A549 (cell line): ENCODE measurements at regions of chrX and their contacts with region 1.

Region 1: GRCh38 chrX:109911046-109911445 is 91.9 kb upstream of the TMEM164 start:
- DNase-seq: peak in 1 of 2 experiments; percentile 7
- ATAC-seq: no peak; a peak in 1 of 6 replicates
- H3K4me3 ChIP-seq: no peak overlapping the region
- H3K27ac ChIP-seq: peak overlapping the region in 1 of 2 experiments; percentile 44; a peak in 1 of 6 replicates
- H3K4me1 ChIP-seq: no peaks in the 10 kb centered on the region
- CTCF ChIP-seq: peak; percentile 68
- EP300 ChIP-seq: no peak
- POLR2A ChIP-seq: no peak
- RAD21 ChIP-seq: peak; percentile 62 to 71

Region 2: GRCh38 chrX:110125446-110126162 is 214.6 kb after region 1 on chrX:
- CTCF ChIA-PET with region 1: interaction called, 11 read pairs
- POLR2A ChIA-PET with region 1: no interaction called
- DNase-seq: peak in 1 of 2 experiments; percentile 20
- ATAC-seq: peak; percentile 56 to 89
- H3K4me3 ChIP-seq: no peak overlapping the region
- H3K27ac ChIP-seq: peak overlapping the region; percentile 48 to 70; a peak in 4 of 6 replicates
- H3K4me1 ChIP-seq: peaks cover 23% of the 10 kb centered on the region; the same call in 2 of the 3 replicates
- CTCF ChIP-seq: peak; percentile 44
- EP300 ChIP-seq: no peak
- POLR2A ChIP-seq: no peak
- RAD21 ChIP-seq: peak; percentile 64 to 69